MCF 10A (cell line): ENCODE measurements at regions of chr13 and their contacts with region 1.

Region 1: DNA sequence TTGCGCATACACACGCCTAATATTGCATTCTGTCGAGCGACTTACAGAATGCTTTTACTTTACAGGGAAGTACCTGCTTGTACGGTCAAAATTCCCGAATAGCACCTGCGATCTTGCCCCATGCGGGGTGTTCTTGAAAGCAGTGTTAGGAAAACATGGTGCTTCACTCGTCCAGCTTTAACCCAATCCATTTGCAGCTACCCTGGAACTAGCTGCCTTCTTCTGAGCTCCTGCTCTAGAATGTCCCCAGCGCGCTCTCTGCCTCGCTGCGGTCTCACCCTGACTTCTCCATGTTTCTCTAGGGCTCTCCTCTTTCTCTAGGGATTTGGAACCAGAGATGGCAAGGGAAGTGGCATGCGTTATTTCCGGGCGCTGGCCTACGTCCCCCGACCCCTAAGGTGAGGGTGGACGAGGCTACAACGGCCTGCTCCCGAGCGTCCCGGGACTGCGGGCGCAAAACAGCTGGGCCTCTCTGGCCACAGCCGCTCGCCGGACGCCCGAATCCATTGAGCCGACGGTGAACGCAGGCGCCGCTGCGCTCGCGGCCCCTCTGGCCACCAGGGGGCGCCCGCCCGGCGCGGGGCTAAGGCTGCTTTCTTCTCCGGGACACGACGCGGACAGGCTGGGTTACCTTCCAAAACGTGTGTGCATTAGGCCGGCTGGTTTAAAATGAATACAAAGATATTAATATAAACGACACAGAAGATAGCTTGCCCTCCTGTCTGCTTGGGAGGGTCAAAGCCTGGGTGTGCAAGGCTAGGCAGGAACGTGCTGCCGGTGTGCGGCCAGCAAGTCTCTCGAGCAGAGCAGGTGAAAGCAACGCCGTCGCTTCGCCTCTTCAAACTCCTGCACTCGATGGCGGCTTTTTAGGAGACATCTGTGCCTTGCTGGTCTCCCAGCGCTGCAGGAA is 1.8 kb upstream of the SPRY2 start:
- DNase-seq: peak; percentile 83
- H3K4me3 Mint-ChIP-seq: no peak overlapping the region
- H3K27ac Mint-ChIP-seq: no peak overlapping the region
- H3K4me1 Mint-ChIP-seq: peaks cover 16% of the 10 kb centered on the region
- H3K27me3 Mint-ChIP-seq: no peaks in the 10 kb centered on the region
- CTCF ChIP-seq: peak; percentile 86

Region 2: GRCh38 chr13:79679334-79679733 is 663.4 kb before region 1 on chr13:
- CTCF ChIA-PET with region 1: interaction called, 28 read pairs
- POLR2A ChIA-PET with region 1: interaction called, 6 read pairs
- intact Hi-C with region 1: loop called (anchors 1 kb)
- DNase-seq: peak; percentile 81
- H3K4me3 Mint-ChIP-seq: no peak overlapping the region
- H3K27ac Mint-ChIP-seq: no peak overlapping the region
- H3K4me1 Mint-ChIP-seq: peaks cover 14% of the 10 kb centered on the region
- H3K27me3 Mint-ChIP-seq: no peaks in the 10 kb centered on the region
- CTCF ChIP-seq: peak; percentile 81

Region 3: DNA sequence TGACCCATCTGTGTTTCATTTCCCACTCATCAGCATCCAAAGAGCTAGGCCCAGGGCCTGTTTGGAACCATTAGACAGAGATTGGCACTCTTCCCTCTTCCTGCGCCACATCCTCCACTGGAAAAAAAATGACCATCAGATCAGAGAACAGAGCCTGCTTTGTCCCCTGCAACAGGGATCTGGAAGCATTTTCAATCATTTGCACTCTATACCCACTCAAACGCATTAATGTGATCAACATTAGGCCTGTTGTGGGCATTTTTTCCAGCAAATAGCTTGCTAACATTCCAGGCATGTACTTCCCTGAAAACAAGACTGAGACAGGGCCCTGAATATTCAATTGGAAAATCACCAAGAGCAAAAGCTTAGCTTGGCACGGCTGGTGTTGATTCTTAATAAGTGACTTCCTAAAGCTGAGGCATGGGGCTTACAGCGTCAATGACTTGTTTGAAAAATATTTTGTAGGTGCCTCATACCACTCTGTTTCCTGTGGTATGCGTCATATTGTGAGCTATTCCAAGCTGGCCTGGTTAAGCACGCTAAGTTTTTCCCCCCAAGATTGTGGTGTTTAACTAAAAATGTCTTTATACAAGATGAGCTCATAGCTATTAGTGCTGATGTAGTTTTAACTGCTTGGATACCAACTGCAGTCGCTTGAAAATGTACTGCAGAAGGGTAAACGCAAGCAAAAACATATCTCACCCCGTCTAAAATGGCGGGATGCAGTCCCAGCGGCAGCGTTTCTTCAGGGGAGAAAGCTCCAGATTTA is 406.2 kb before region 1 on chr13:
- CTCF ChIA-PET with region 1: interaction called, 3 read pairs
- POLR2A ChIA-PET with region 1: interaction called, 3 read pairs
- intact Hi-C with region 1: loop called (anchors 2 kb)
- DNase-seq: peak; percentile 93
- H3K4me3 Mint-ChIP-seq: peak overlapping the region; percentile 37
- H3K27ac Mint-ChIP-seq: peak overlapping the region; percentile 99
- H3K4me1 Mint-ChIP-seq: peaks cover 27% of the 10 kb centered on the region
- H3K27me3 Mint-ChIP-seq: no peaks in the 10 kb centered on the region
- CTCF ChIP-seq: no peak

Region 4: GRCh38 chr13:80363890-80364503 is 21.3 kb after region 1 on chr13:
- CTCF ChIA-PET with region 1: interaction called, 101 read pairs
- POLR2A ChIA-PET with region 1: interaction called, 28 read pairs
- intact Hi-C with region 1: loop called (anchors 2 kb)
- DNase-seq: peak; percentile 45
- H3K4me3 Mint-ChIP-seq: no peak overlapping the region
- H3K27ac Mint-ChIP-seq: no peak overlapping the region
- H3K4me1 Mint-ChIP-seq: peaks cover 14% of the 10 kb centered on the region
- H3K27me3 Mint-ChIP-seq: no peaks in the 10 kb centered on the region
- CTCF ChIP-seq: peak; percentile 64

Region 5: GRCh38 chr13:80630685-80631121 is 288.0 kb after region 1 on chr13:
- CTCF ChIA-PET with region 1: interaction called, 22 read pairs
- POLR2A ChIA-PET with region 1: interaction called, 16 read pairs
- intact Hi-C with region 1: loop called (anchors 1 kb)
- DNase-seq: peak; percentile 81
- H3K4me3 Mint-ChIP-seq: no peak overlapping the region
- H3K27ac Mint-ChIP-seq: peak overlapping the region; percentile 61
- H3K4me1 Mint-ChIP-seq: peaks cover 16% of the 10 kb centered on the region
- H3K27me3 Mint-ChIP-seq: no peaks in the 10 kb centered on the region
- CTCF ChIP-seq: no peak

Region 6: DNA sequence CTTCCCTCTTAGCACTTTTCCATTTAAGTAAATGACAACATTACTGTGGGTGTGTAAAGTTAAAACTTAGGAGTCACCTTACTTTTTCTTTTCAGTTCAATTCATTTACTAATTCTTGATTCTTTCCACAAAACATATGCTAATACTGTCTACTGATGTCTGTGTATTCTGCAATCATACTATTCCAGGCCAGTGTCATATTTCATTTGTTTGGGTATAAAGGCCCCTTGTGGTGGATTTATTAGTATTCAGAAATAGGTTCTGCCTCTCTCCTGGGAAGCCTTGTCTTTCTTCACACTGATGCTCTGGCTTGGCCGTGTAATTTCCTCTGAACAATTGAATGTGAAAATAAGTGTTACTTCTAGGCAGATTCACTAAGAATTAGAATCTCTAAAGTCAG is 620.1 kb after region 1 on chr13:
- CTCF ChIA-PET with region 1: interaction called, 3 read pairs
- POLR2A ChIA-PET with region 1: no interaction called
- intact Hi-C with region 1: loop called (anchors 2 kb)
- DNase-seq: peak; percentile 24
- H3K4me3 Mint-ChIP-seq: no peak overlapping the region
- H3K27ac Mint-ChIP-seq: no peak overlapping the region
- H3K4me1 Mint-ChIP-seq: peaks cover 4% of the 10 kb centered on the region
- H3K27me3 Mint-ChIP-seq: no peaks in the 10 kb centered on the region
- CTCF ChIP-seq: no peak